ENCODE measurements at regions of chr17 and their contacts with region 1.

Region 1: DNA sequence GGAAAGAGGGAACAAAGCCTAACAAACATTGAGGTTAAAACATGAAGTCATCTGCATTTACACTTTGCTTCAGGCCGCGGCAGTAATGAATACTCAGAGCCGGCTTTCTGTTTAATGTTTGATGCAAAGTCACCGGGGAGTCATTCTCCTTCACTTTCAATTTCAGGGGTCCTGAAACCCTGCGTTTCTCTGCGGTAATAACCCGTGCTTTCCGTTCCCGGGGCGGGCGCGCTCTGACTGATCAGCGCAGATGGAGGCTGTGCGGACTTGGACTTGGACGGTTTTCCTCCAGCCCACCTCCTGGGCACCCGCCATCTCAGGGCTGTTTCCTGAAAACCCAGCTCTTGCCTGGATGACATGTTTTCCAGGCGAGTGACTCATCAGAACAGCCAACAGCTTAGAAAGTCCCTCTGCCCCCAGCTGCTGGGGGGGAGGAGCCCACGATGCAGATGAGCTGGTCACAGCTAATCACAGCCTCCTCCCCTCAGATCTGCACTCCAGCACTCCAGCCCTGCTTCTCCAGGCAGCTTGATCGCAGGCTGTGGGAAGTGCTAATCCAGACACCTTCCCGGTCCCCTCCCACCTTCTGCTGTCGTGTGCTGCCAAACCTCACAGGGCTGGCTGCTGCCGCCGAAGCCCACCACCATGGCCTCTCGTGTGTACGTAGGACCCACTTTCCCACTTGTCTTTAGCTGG is 158.6 kb upstream of the CHMP6 start:
- DNase-seq: peak; percentile 30 to 89 (median 75)
- ATAC-seq: peak; percentile 92
- H3K4me3 ChIP-seq: peak overlapping the region; percentile 51 to 68
- H3K4me3 Mint-ChIP-seq: peak overlapping the region; percentile 92
- H3K27ac ChIP-seq: peak overlapping the region; percentile 77 to 84
- H3K27ac Mint-ChIP-seq: peak overlapping the region; percentile 96
- H3K4me1 ChIP-seq: peaks cover 19% of the 10 kb centered on the region
- H3K4me1 Mint-ChIP-seq: peaks cover 27% of the 10 kb centered on the region
- H3K27me3 ChIP-seq: no peaks in the 10 kb centered on the region
- H3K27me3 Mint-ChIP-seq: no peaks in the 10 kb centered on the region
- CTCF ChIP-seq: no peak

Region 2: GRCh38 chr17:80755650-80756405 is 77.2 kb before region 1 on chr17:
- CTCF ChIA-PET with region 1: no interaction called
- POLR2A ChIA-PET with region 1: no interaction called
- intact Hi-C with region 1: loop called (anchors 2 to 10 kb)
- DNase-seq: no peak
- ATAC-seq: no peak
- H3K4me3 ChIP-seq: no peak overlapping the region
- H3K4me3 Mint-ChIP-seq: no peak overlapping the region
- H3K27ac ChIP-seq: no peak overlapping the region
- H3K27ac Mint-ChIP-seq: no peak overlapping the region
- H3K4me1 ChIP-seq: peaks cover 47% of the 10 kb centered on the region
- H3K4me1 Mint-ChIP-seq: peaks cover 52% of the 10 kb centered on the region
- H3K27me3 ChIP-seq: no peaks in the 10 kb centered on the region
- H3K27me3 Mint-ChIP-seq: no peaks in the 10 kb centered on the region
- CTCF ChIP-seq: no peak